CD8-positive, alpha-beta T cell (primary cell): ENCODE measurements at regions of chr13 and their contacts with region 1.

Region 1: GRCh38 chr13:86510792-86511191 is 711.6 kb upstream of the SLITRK6 start:
- DNase-seq: no peak
- ATAC-seq: no peak
- H3K4me3 ChIP-seq: no peak overlapping the region
- H3K4me3 Mint-ChIP-seq: no peak overlapping the region
- H3K27ac ChIP-seq: no peak overlapping the region
- H3K27ac Mint-ChIP-seq: no peak overlapping the region
- H3K4me1 ChIP-seq: no peaks in the 10 kb centered on the region
- H3K4me1 Mint-ChIP-seq: no peaks in the 10 kb centered on the region
- H3K27me3 ChIP-seq: no peaks in the 10 kb centered on the region
- H3K27me3 Mint-ChIP-seq: no peaks in the 10 kb centered on the region
- CTCF ChIP-seq: no peak

Region 2: DNA sequence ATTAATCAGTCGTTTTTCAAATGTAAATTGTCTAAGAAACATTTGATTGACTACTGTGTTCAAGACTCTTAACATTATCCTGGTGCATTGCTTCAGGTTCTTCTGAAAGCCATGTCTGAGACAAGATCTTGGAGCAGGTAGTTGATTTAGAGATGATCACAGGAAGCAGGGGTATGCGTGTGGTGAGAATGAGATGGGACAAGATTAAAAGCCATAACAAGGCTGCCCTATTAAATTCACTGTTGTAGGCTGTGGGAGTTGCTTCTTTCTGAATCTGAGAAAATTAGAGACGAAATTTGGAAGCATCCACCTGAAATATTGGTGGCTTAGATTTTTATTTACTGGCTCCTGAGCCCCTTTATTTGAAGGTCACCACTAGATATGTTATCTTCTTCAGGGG is 24.2 kb before region 1 on chr13:
- CTCF ChIA-PET with region 1: no interaction called
- POLR2A ChIA-PET with region 1: no interaction called
- intact Hi-C with region 1: loop called in 1 of 2 experiments (anchors 2 kb)
- DNase-seq: no peak
- ATAC-seq: no peak
- H3K4me3 ChIP-seq: no peak overlapping the region
- H3K4me3 Mint-ChIP-seq: no peak overlapping the region
- H3K27ac ChIP-seq: no peak overlapping the region
- H3K27ac Mint-ChIP-seq: no peak overlapping the region
- H3K4me1 ChIP-seq: no peaks in the 10 kb centered on the region
- H3K4me1 Mint-ChIP-seq: no peaks in the 10 kb centered on the region
- H3K27me3 ChIP-seq: no peaks in the 10 kb centered on the region
- H3K27me3 Mint-ChIP-seq: no peaks in the 10 kb centered on the region
- CTCF ChIP-seq: no peak